Endothelial cell of umbilical vein (primary cell): ENCODE measurements at regions of chr11 and their contacts with region 1.

Region 1: GRCh38 chr11:28756977-28757376 is 648.8 kb downstream of the METTL15 start:
- DNase-seq: peak; percentile 83
- H3K4me3 ChIP-seq: peak overlapping the region in 1 of 3 experiments; percentile 42
- H3K27ac ChIP-seq: peak overlapping the region; percentile 90
- H3K4me1 ChIP-seq: peaks cover 39% of the 10 kb centered on the region
- H3K27me3 ChIP-seq: no peaks in the 10 kb centered on the region
- CTCF ChIP-seq: no peak
- POLR2A ChIP-seq: no peak

Region 2: DNA sequence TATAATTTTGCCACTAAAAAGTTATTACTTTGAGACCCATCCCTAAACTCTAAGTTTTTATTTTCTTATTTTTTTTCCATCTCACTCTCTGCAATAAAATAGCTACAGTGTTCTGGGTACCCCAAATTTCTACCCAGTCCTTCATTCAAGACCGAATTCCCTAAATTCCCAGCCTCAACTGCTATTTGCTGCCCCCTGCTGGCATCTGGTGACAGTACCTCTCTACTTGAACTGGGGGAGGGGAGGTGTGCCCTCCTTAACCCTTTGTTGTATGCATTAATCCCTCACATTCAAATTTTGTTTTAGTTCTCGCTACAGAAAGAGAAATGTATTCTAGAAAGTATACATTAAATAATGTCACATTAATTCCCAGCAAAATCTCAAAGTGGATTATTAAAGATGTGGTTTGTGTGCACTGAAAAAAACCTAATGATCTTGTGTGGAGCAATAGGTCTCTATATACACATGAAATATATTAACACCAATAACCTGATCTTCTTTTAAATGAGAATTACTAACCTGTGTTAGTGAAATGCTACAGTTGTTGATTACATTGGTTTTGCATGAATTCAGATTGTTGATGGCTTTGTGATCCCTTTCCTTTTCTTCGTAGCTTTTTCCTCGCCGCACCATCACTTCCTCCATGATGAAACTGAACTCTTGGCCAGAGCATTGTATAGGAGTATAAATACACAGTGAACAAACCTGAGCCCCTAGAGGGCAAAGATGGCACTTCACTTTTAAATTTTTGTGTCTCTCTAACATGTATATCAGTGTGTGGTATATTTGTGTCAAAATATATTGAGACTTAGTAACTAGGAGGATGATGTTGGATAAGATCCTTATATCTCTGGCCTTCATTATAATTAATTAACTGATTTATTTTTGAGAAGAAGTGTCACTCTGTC is 58.8 kb before region 1 on chr11:
- CTCF ChIA-PET with region 1: interaction called, 3 read pairs
- POLR2A ChIA-PET with region 1: no interaction called
- dilution Hi-C with region 1: no loop called
- intact Hi-C with region 1: loop called (anchors 1 kb)
- DNase-seq: peak; percentile 60
- H3K4me3 ChIP-seq: no peak overlapping the region
- H3K27ac ChIP-seq: no peak overlapping the region
- H3K4me1 ChIP-seq: peaks cover 21% of the 10 kb centered on the region
- H3K27me3 ChIP-seq: no peaks in the 10 kb centered on the region
- CTCF ChIP-seq: peak; percentile 73 to 80
- POLR2A ChIP-seq: no peak

Region 3: GRCh38 chr11:28743061-28743550 is 13.9 kb before region 1 on chr11:
- CTCF ChIA-PET with region 1: interaction called, 6 read pairs
- POLR2A ChIA-PET with region 1: no interaction called
- dilution Hi-C with region 1: no loop called
- intact Hi-C with region 1: loop called (anchors 2 kb)
- DNase-seq: peak; percentile 91
- H3K4me3 ChIP-seq: no peak overlapping the region
- H3K27ac ChIP-seq: peak overlapping the region; percentile 70
- H3K4me1 ChIP-seq: peaks cover 45% of the 10 kb centered on the region
- H3K27me3 ChIP-seq: no peaks in the 10 kb centered on the region
- CTCF ChIP-seq: no peak
- POLR2A ChIP-seq: no peak

Region 4: DNA sequence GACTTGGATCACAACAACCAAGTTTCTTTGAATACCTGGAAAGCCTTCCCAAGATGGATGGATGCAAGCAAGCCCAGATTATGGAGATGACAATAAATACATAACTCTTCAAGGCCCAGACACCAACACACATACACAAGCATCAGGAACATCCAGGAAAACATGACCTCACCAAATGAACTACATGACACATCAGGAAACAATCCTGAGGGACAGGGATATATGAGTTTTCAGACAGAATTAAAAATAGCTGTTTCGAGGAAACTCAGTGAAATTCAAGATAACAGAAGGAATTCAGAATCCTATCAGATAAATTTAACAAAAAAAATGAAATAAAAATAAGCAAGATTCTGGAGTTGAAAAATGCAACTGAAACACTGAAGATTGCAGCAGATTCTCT is 10.6 kb after region 1 on chr11:
- CTCF ChIA-PET with region 1: interaction called, 9 read pairs
- POLR2A ChIA-PET with region 1: no interaction called
- dilution Hi-C with region 1: no loop called
- intact Hi-C with region 1: loop called (anchors 1 kb)
- DNase-seq: peak; percentile 74
- H3K4me3 ChIP-seq: no peak overlapping the region
- H3K27ac ChIP-seq: peak overlapping the region; percentile 82
- H3K4me1 ChIP-seq: peaks cover 15% of the 10 kb centered on the region
- H3K27me3 ChIP-seq: no peaks in the 10 kb centered on the region
- CTCF ChIP-seq: no peak
- POLR2A ChIP-seq: no peak

Region 5: DNA sequence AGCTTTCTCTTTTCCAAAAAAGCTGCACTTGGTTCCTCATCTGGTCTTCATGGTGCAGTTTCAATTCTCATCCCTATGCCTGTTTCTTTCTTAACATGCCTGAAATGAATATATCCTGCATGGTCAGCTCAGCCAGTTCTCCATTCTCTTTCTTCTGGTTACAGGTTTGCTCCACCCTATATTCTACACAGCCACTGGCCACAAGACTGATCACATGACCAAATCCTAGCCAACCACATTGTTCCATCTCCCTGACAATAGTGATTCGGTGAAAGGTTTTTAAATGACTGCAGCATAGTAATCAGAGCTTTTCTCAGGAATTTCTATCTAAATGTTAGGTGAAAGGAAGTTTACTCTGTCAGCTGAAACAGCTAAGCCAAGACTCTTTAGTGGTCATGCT is 242.6 kb after region 1 on chr11:
- CTCF ChIA-PET with region 1: no interaction called
- POLR2A ChIA-PET with region 1: no interaction called
- dilution Hi-C with region 1: no loop called
- intact Hi-C with region 1: loop called (anchors 5 kb)
- DNase-seq: no peak
- H3K4me3 ChIP-seq: no peak overlapping the region
- H3K27ac ChIP-seq: no peak overlapping the region
- H3K4me1 ChIP-seq: peaks cover 18% of the 10 kb centered on the region
- H3K27me3 ChIP-seq: no peaks in the 10 kb centered on the region
- CTCF ChIP-seq: no peak
- POLR2A ChIP-seq: no peak

Region 6: DNA sequence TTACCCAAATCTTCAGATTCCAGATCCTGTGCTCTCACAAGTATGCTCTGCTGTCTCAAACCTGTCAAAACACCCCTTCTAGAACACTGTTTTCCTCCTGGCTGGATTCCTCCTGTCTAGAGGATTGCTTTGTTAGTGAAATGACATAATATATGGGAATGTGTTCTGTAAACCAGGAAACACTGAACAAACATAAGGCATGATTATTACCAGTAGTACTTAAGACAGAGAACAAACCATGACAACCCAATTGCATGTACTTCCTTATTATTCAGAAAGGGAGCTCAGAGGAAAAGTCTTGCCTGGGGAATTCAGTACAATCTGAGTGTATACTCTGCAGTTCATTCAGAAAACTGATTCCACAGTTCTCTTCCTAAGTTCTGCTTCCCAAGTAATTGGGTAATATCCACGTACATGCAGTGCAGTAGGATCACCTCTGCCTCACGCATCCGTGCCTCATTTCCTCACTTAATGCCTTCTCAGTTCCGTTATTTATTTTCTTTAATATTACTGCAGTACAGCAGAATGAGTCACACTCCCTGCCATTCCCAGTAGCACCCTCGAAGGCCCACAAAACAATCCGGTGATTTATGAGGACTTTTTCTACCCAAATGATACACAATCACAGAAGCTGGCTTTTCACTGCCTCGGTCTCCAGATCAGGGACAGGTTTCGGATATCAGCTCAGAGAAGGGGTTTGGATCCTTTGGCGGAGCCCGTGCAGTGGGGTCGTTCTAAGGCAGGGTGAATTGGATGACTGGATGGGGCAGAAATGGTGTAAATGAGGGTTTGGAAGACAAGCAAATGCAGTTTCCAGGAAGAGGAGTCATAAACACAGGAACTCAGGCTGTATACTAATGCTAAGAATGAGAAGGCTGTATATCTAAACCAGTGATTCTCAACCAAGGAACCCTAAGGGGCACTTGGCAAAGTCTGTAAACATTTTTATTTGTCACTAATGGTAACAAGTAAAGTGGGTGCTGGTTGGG is 363.0 kb after region 1 on chr11:
- CTCF ChIA-PET with region 1: no interaction called
- POLR2A ChIA-PET with region 1: interaction called, 3 read pairs
- dilution Hi-C with region 1: no loop called
- intact Hi-C with region 1: loop called (anchors 1 kb)
- DNase-seq: peak; percentile 99
- H3K4me3 ChIP-seq: peak overlapping the region in 2 of 3 experiments; percentile 25 to 62
- H3K27ac ChIP-seq: peak overlapping the region; percentile 100
- H3K4me1 ChIP-seq: peaks cover 33% of the 10 kb centered on the region
- H3K27me3 ChIP-seq: no peaks in the 10 kb centered on the region
- CTCF ChIP-seq: no peak
- POLR2A ChIP-seq: peak; percentile 74

Region 7: DNA sequence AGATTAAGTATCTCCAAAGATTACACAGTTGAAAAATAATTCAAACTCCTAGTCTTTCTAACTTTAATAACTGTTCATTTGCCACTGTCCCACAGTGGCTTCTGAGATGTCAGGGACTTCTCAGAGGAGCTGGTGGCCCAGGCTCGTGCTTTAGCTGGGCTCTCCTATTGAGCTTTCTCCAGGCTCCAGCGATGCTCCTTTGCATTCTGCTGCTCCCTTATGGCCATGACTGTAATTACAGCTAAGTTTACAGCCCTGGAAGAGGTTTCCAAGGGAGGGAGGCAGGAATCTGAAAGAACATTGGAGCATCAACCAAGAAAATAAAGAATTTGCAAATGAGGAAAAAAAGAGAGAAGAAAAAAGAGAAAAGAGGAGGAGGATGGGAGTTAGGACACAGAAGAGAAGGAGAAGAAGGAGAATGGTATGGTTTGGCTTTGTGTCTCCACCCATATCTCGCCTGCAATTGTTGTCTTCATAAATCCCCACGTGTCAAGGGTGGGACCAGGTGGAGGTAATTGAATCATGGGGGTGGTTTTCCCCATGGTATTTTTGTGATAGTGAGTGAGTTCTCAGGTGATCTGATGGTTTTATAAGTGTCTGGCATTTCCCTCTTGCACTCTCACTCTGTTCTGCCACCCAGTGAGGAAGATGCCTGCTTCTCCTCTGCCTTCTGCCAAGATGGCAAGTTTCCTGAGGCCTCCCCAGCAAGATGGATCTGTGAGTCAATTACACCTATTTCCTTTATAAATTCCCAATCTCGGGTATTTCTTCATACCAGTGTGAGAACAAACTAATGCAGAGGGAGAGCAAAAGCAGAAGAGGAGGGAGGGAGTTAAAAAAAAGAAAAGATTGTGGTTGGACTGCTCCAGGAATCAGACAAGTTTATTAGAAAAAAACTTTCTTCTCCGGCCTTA is 402.8 kb after region 1 on chr11:
- CTCF ChIA-PET with region 1: interaction called, 16 read pairs
- POLR2A ChIA-PET with region 1: no interaction called
- dilution Hi-C with region 1: no loop called
- intact Hi-C with region 1: loop called (anchors 2 kb)
- DNase-seq: peak; percentile 82
- H3K4me3 ChIP-seq: no peak overlapping the region
- H3K27ac ChIP-seq: peak overlapping the region; percentile 12
- H3K4me1 ChIP-seq: peaks cover 9% of the 10 kb centered on the region
- H3K27me3 ChIP-seq: no peaks in the 10 kb centered on the region
- CTCF ChIP-seq: peak; percentile 67 to 71
- POLR2A ChIP-seq: no peak